HEK293 (cell line): ENCODE measurements at regions of chr5 and their contacts with region 1.

Region 1: DNA sequence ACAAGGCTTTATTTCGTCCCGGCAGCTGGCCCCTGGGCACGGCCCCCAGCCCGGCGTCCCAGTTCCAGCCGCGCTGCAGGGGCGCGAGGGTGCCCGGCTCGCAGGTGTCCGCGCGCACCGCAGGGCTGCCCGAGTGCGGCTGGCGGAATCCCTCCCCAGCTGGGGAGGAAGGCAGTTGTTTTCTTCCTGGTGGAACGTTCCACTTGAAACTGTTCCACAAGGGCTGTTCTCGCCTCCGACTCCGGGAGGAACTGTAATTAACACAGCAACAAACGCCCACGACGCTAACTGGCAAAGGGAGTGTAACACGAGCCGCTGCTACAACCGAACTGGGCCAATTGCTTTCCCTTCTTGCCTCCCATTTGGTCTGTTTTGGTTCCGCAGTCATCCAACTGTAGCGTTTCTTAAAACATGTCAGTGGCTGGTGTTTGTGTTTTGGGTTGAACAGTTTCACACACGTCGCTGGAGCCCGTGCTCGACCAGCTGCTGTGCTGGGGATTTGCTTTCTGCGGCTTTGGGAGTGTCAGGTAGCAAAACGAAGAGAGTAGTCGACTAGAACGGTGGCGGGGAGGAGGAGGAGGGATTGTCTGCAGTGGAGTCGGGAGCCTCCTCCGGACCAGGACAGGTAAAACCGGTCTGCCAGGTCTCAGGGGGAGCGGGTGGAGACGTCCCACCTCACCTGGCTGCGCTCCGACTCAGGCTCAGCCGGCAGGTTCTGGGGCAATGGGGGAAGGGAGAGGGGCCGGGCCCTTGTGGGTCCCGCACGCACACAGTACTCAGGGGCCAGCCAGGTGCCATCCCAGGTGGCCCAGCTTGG is 131.6 kb upstream of the NIPBL start:
- H3K4me3 ChIP-seq: peak overlapping the region; percentile 65
- H3K27ac ChIP-seq: peak overlapping the region; percentile 67
- H3K4me1 ChIP-seq: peaks cover 12% of the 10 kb centered on the region
- CTCF ChIP-seq: no peak; the same call in none of the 2 replicates

Region 2: GRCh38 chr5:36728697-36729543 is 16.1 kb before region 1 on chr5:
- CTCF ChIA-PET with region 1: interaction called, 29 read pairs
- POLR2A ChIA-PET with region 1: interaction called, 3 read pairs
- H3K4me3 ChIP-seq: no peak overlapping the region
- H3K27ac ChIP-seq: no peak overlapping the region
- H3K4me1 ChIP-seq: no peaks in the 10 kb centered on the region
- CTCF ChIP-seq: no peak

Region 3: DNA sequence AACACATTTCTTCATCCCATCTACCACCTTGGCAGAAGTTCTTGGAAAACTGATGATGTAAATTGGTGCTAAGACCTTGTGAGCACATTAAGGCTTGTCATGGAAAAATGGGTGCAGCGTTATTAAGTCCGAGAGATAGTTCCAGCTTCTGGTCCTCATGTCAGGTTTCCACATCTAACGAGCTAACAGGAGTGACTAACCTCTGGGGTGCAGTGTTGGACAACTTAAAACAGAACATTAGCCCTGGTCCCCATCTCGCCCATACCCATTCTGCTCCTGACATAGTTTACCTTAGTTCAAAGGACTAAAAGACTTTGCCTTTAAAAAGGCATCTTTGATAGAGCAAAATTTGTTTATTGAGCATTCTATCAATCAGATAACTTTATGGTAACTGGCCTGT is 10.6 kb before region 1 on chr5:
- CTCF ChIA-PET with region 1: interaction called, 29 read pairs
- POLR2A ChIA-PET with region 1: interaction called, 3 read pairs
- H3K4me3 ChIP-seq: no peak overlapping the region
- H3K27ac ChIP-seq: no peak overlapping the region
- H3K4me1 ChIP-seq: no peaks in the 10 kb centered on the region
- CTCF ChIP-seq: peak; percentile 38

Region 4: DNA sequence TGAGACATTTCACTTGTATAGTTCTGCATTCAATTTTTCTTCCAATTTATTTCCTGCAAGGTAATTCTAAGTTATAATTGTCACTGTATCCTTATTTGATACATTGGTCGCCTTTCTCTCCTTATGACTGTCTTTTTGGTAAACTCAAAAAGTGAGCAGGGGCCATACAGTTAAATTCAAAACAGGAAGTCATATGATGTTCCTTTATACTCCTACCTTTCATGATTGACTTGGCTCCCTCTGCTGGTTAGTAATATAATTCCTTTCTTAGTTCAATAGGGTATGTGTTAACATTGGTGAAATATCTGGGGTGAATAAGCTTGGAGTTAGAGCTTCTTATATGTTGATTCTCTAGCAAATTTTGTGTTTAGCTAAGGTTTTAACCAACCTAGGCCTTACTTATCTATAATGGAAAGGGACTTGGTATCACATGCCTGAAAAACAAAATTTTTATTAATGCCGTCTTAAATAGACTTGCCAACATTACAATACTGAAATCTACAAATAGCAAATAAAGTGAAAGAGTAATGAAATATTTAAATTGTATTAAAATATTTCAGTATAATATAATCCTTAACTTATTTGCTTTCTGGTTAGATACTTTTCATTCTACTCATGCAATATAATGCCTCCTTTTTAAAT is 125.5 kb after region 1 on chr5:
- CTCF ChIA-PET with region 1: interaction called, 85 read pairs
- POLR2A ChIA-PET with region 1: interaction called, 22 read pairs
- H3K4me3 ChIP-seq: no peak overlapping the region
- H3K27ac ChIP-seq: no peak overlapping the region
- H3K4me1 ChIP-seq: peaks cover 8% of the 10 kb centered on the region; the same call in 1 of the 2 replicates
- CTCF ChIP-seq: peak; percentile 39; the same call in 1 of the 2 replicates

Region 5: GRCh38 chr5:36875790-36876388 is 130.9 kb after region 1 on chr5:
- CTCF ChIA-PET with region 1: interaction called, 85 read pairs
- POLR2A ChIA-PET with region 1: interaction called, 22 read pairs
- H3K4me3 ChIP-seq: peak overlapping the region; percentile 95
- H3K27ac ChIP-seq: peak overlapping the region; percentile 99
- H3K4me1 ChIP-seq: peaks cover 18% of the 10 kb centered on the region
- CTCF ChIP-seq: peak; percentile 92